A549 (cell line): ENCODE measurements at regions of chrX and their contacts with region 1.

Region 1: DNA sequence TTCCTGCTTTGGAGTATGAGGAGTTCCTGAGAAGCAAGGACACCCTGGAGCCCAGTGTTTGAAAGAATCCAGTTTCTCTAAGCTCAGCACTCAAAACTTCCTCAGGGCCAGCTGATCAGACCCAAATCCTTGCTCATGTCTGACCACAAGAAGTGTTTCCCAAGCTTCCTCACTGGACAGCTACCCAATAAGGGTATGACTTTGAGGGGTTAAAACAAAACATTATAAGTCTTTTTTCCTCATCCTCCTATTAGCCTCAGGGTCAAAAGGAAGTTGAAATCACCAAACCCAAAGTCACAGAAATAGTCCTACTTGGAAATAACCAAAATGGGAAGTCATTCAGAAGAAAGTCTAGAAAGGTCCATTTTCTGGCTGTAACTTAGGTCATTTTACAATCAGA is 13.7 kb downstream of the ZBTB33 start:
- DNase-seq: no peak
- ATAC-seq: no peak
- H3K4me3 ChIP-seq: no peak overlapping the region
- H3K27ac ChIP-seq: no peak overlapping the region
- H3K4me1 ChIP-seq: no peaks in the 10 kb centered on the region
- CTCF ChIP-seq: no peak
- EP300 ChIP-seq: no peak
- POLR2A ChIP-seq: no peak
- RAD21 ChIP-seq: no peak

Region 2: DNA sequence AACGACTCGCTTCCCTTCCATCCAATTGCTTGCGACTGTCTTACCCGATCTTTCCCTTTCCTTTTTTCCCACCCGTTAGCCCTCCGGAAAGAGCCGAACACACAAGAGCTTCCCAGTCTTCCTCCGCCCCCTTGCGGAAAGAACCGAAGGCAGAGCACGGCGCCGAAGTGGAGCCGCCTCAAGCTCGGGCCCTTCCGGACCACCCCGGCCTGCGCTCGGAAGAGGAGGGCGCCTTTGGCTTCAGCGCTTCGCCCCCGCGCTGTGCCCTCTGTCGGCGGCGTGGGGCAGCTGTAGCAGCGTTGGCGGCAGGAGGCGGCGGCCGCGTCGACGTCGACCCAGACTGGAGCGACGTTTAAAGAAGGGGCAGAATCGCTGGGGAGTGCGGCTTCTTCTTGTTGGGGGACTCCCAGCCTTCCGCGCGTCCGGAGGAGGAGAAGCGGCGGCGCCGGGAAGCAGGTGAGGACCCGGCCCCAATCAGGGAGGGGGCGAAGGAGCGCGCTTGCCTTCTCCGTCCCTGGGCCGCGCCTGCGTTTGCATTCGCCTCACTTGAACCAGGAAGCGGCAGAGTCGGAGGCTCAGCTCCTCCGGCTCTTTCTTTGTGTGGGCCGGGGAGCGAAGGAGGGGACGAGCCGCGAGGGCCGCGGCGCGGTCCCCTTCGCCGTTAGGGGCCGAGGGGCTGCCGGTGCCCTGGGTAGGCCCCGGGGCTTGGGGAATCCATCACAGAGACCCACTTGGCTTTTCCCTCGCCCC is 13.6 kb before region 1 on chrX and contains the start of gene ZBTB33:
- CTCF ChIA-PET with region 1: interaction called, 10 read pairs
- POLR2A ChIA-PET with region 1: no interaction called
- DNase-seq: peak; percentile 77 to 96
- ATAC-seq: peak; percentile 97 to 99
- H3K4me3 ChIP-seq: peak within 1 kb of the TSS; percentile 71
- H3K27ac ChIP-seq: peak within 1 kb of the TSS; percentile 85 to 95
- H3K4me1 ChIP-seq: 0 out of 3 replicates have a peak, but pooled peaks cover 9% of the 10 kb centered on the region
- CTCF ChIP-seq: peak; percentile 49
- EP300 ChIP-seq: no peak
- POLR2A ChIP-seq: peak; percentile 62
- RAD21 ChIP-seq: peak in 1 of 2 experiments; percentile 18; a peak in 1 of 5 replicates
- polyA plus RNA-seq, gene ZBTB33: 12.3 and 15.6 TPM in 2 replicates